ENCODE measurements at regions of chr3 and their contacts with region 1.

Region 1: GRCh38 chr3:30894538-30895251 is at the start of gene GADL1:
- DNase-seq: peak; percentile 32 to 60
- ATAC-seq: peak; percentile 90 to 93
- H3K4me3 ChIP-seq: peak within 1 kb of the TSS; percentile 81 to 87 (median 82)
- H3K27ac ChIP-seq: peak within 1 kb of the TSS; percentile 80 to 88 (median 84)
- H3K4me1 ChIP-seq: peaks cover 8 to 12% of the 10 kb centered on the region in 2 donors
- H3K27me3 ChIP-seq: no peaks in the 10 kb centered on the region
- CTCF ChIP-seq: peak in 1 of 5 experiments; percentile 14
- POLR2A ChIP-seq: no peak
- total RNA-seq, gene GADL1: 0.13 to 0.55 (median 0.42) TPM

Region 2: GRCh38 chr3:30347679-30348216 is 546.9 kb before region 1 on chr3:
- in situ Hi-C with region 1: no loop called
- intact Hi-C with region 1: no loop called
- DNase-seq: no peak
- ATAC-seq: no peak
- H3K4me3 ChIP-seq: no peak overlapping the region
- H3K27ac ChIP-seq: no peak overlapping the region
- H3K4me1 ChIP-seq: peaks cover 0 to 18% of the 10 kb centered on the region in 2 donors
- H3K27me3 ChIP-seq: no peaks in the 10 kb centered on the region
- CTCF ChIP-seq: no peak
- POLR2A ChIP-seq: no peak

Region 3: DNA sequence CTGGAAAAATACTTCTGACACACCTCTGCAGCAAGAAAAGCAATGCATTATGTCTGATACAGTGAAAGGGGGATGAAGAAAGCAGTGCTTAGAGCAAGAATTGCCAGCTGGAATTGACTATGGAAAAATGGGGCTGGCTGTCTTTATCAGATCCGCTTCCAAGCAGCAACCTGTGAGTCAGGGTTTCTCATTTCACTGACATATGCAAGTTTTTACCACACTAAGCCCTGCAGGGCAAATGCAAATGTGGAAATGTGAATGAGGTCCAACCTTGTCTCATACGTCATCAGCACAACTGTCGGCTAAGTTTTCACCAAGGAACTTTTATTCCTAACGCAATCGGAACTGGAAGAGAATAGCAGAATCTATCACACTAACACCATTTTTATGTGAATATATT is 172.3 kb after region 1 on chr3:
- in situ Hi-C with region 1: no loop called
- intact Hi-C with region 1: loop called (anchors 5 kb)
- DNase-seq: peak; percentile 58 to 77
- ATAC-seq: peak; percentile 100
- H3K4me3 ChIP-seq: no peak overlapping the region
- H3K27ac ChIP-seq: peak overlapping the region; percentile 35 to 60 (median 54)
- H3K4me1 ChIP-seq: peaks cover 17 to 19% of the 10 kb centered on the region in 2 donors
- H3K27me3 ChIP-seq: no peaks in the 10 kb centered on the region
- CTCF ChIP-seq: no peak
- POLR2A ChIP-seq: no peak

Measured in gastrocnemius medialis (tissue), 4 donors.